Right lobe of liver (tissue), 6 donors: ENCODE measurements at regions of chr12 and their contacts with region 1.

Region 1: DNA sequence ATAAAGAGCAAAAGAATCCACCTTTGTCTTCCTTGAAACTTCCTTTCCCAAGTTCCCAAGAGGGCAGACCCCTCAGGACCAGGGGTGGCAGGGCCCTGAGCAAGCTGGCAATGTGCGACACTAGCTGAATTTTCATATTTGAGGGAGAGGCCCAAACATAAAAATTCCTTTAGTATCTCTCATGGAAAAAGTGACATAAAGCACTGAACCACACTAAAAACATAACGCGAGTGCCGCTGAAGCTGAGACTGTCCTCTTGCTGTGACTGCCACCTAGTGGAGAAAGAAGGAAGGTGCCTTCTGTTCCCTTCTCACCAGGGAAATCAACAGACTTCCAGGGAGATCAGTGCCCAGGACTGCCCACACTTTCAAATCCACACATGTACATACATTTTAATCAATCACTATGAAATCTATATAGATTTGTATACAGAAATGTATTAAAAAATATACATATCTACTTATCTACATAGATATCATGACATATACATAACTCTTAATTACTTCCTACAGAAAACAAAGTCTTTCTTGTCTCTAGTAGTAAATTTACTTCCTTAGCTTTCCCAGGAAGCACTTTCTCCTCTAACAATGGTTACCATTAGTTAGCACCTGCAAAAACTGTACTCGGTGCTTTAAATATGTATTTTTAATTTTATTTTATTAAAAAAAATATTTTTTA is 53.8 kb downstream of the SSH1 start:
- DNase-seq: peak in 2 of 3 donors; percentile 11 to 76
- ATAC-seq: peak; percentile 91 to 98 (median 92)
- H3K4me3 ChIP-seq: no peak overlapping the region
- H3K27ac ChIP-seq: peak overlapping the region; percentile 38 to 59 (median 42)
- H3K4me1 ChIP-seq: peaks cover 0 to 4% (median 0%) of the 10 kb centered on the region in 4 donors
- H3K27me3 ChIP-seq: no peaks in the 10 kb centered on the region
- CTCF ChIP-seq: peak in 3 of 4 donors; percentile 94 to 98 (median 96)
- POLR2A ChIP-seq: no peak

Region 2: GRCh38 chr12:108649669-108650068 is 153.9 kb before region 1 on chr12:
- intact Hi-C with region 1: loop called in 1 of 2 experiments (anchors 10 kb)
- DNase-seq: no peak
- ATAC-seq: no peak
- H3K4me3 ChIP-seq: no peak overlapping the region
- H3K27ac ChIP-seq: no peak overlapping the region
- H3K4me1 ChIP-seq: peaks cover 0 to 5% (median 0%) of the 10 kb centered on the region in 4 donors
- H3K27me3 ChIP-seq: no peaks in the 10 kb centered on the region
- CTCF ChIP-seq: no peak
- POLR2A ChIP-seq: no peak

Region 3: DNA sequence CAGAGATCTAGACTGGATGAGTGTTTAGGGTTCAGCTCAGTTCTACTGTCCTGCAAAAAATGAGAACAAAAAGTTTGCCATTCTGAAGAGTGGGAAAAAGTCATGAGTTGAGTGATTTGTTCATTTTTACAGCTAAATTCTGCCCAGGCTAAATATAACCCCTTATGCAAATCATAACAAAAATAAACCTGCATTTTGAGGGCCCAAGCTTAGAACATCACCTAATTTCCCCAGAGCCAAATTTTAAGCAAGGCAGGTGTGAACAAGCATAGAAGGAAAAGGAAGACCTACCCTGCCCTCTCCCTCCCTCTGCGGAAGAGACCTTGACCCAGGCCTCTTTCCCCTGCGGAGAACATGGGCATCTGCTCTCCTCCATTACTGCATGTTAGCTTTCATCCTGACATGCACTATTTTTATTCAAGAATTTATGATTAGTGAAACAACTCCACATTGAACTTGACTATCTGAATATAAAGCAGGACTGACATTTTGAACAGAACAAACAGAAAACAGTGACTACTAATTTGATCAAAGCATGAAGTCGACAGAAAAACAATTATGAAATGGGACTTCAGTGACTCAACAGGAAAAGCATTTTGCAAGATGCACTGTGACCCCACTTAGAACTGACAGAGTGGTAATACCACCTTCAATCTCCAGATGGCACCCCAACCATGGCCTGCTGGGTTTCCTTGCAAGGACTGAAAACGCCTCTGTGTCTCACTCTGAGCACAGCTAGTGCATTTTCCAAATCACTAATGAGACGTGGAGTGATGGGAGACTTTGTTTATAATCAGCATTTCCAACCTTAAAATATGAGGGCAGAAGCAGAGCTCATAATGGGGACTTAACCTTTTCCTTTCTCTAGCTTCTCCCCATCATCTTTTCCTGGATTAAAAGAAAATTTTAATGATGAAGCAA is 139.0 kb before region 1 on chr12:
- intact Hi-C with region 1: loop called (anchors 5 to 10 kb)
- DNase-seq: peak; percentile 71 to 88 (median 78)
- ATAC-seq: peak; percentile 92 to 94 (median 93)
- H3K4me3 ChIP-seq: no peak overlapping the region
- H3K27ac ChIP-seq: peak overlapping the region; percentile 64 to 81 (median 77)
- H3K4me1 ChIP-seq: peaks cover 0 to 28% (median 14%) of the 10 kb centered on the region in 4 donors
- H3K27me3 ChIP-seq: no peaks in the 10 kb centered on the region
- CTCF ChIP-seq: peak; percentile 89 to 97 (median 92)
- POLR2A ChIP-seq: no peak